ENCODE measurements at regions of chr12 and their contacts with region 1.

Region 1: DNA sequence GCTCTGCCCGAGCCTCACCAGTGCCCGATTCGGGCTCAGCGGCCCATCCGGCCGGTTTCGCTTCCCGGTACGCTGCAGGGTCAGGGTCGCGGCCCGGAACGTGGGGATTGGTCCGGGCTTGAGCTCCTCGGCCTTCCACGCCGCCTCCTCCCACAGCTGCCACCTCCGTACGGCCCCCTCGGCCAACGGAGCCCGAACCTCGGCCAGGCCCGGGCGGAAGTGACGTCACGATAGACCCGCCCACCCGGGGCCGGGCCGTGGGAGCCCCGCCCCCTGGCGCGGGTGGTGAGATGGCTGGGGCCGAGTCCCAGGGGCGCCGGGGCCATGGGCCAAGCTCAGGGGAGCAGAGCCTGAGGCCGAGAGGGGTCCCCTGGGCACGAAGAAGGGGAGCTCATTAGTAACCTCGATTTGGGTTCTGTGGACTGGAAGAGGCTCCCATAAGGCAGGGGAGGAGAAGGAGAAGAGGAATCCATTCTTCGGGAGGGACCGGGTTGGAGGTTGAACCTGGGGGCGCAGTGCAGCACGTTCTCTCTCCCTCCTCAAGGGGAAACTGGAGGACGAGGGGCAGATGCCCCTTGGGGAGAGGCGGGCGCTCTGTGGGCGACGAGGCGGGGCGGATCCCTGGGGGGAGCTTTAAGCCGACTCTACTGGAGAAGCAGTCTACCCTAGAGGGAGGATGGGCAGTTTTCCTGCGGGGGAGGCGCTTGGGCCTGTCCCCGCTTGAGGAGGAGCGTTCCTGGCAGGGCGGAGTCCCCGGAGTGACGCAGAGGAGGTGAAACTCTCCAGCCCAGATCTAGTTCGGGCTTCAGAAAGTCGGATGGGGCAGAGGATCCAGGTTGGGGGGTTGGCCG is at the start of gene MLF2:
- DNase-seq: peak; percentile 94
- ATAC-seq: peak; percentile 95
- H3K4me3 ChIP-seq: peak within 1 kb of the TSS; percentile 80
- H3K27ac ChIP-seq: peak within 1 kb of the TSS; percentile 99
- H3K4me1 ChIP-seq: peaks cover 11% of the 10 kb centered on the region
- H3K27me3 ChIP-seq: no peaks in the 10 kb centered on the region
- CTCF ChIP-seq: peak; percentile 95 to 99 (median 97); a peak in 3 of 6 replicates
- EP300 ChIP-seq: peak in 1 of 2 experiments; percentile 40; a peak in 1 of 4 replicates
- POLR2A ChIP-seq: peak; percentile 93
- RAD21 ChIP-seq: no peak
- polyA plus RNA-seq, gene MLF2: 13.5 to 21.5 TPM

Region 2: DNA sequence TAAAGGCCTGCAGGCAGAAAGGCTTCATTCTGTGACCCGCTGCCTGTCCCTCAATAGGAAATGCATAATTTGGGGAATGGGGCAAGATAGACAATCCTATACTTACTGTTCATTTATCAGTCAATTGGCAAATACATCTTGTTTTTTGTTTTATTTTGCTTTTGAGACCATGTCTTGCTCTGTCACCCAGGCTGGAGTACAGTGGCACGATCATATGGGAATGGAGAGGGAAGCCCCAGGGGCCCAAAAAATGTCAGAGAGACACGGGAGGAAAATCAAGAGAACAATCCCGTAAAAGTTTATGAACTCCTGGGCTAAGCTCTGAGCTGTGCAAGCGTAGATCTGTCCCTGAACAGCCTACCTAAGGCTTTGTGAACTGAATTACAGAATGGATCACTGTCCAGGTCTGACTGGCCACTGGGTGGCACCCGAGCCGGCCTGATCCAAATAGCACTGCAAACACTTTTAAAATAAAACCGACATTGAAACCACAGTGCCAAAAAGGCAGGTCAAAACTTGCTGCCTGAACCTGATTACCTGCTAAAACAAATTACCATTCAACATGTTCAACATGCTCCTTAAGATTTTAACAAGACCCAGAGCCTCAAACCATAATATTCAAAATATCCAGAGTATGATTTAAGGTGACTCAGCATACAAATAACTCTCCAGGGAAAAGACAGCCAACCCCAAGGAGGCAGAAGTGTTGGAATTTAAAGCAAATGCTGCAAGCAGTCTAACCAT is 17.5 kb before region 1 on chr12:
- CTCF ChIA-PET with region 1: interaction called, 19 read pairs
- POLR2A ChIA-PET with region 1: interaction called, 6 read pairs
- RAD21 ChIA-PET with region 1: interaction called, 7 read pairs
- SMC1A ChIA-PET with region 1: interaction called, 4 read pairs
- in situ Hi-C with region 1: no loop called
- intact Hi-C with region 1: no loop called
- DNase-seq: no peak
- ATAC-seq: peak; percentile 91
- H3K4me3 ChIP-seq: no peak overlapping the region
- H3K27ac ChIP-seq: 0 out of 2 replicates have a peak overlapping the region, but pooled peaks have one; percentile 60
- H3K4me1 ChIP-seq: peaks cover 5% of the 10 kb centered on the region; the same call in 1 of the 2 replicates
- H3K27me3 ChIP-seq: no peaks in the 10 kb centered on the region
- CTCF ChIP-seq: peak; percentile 59 to 64 (median 61)
- EP300 ChIP-seq: no peak
- POLR2A ChIP-seq: no peak
- RAD21 ChIP-seq: peak; percentile 67

Region 3: DNA sequence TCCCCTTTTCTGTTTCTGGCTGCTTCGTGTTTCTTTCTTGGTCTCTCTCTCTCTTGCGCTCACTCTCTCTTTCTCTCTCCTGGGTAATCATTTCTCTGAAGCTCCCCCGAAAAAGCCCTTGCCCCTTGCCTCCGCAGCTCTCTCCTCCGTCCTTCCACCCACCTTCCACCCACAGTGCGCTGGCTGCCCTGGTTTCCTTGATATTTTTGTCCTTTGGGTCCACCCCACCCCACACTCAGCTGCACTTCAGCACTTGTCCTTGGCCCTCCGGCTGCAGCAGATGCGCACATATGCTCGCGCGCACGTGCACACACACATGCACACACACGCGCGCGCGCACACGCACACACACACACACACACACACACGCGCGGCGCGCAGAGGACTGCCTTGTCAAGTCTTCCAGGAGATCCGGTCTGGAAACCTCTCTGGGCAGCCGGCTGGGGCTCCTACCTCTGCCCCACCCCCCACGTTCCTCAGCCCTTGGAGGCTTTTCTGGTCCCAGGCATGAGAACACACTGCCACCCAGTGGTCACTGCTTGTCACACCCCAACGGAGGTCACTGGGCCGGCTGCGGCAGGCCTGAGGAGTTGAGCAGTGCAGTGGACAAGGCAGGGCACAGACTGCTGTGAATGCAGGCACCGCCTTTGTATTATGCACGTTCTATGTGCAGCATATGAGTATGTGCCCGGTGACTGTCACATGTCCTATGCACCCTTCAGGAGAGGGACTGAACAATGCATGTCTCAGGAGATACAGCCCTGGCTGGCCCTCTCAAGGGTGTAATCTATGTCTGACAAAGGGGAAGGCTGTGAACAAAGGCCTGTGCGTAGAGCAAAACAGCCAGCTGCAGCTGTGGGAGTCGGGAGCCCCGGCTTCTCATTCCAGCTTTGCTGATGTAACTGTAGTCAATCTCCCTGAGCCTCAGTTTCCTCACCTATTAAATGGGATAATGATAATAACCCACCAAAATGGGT is 25.7 kb after region 1 on chr12:
- CTCF ChIA-PET with region 1: interaction called, 221 read pairs
- POLR2A ChIA-PET with region 1: interaction called, 11 read pairs
- RAD21 ChIA-PET with region 1: interaction called, 68 read pairs
- SMC1A ChIA-PET with region 1: interaction called, 84 read pairs
- in situ Hi-C with region 1: no loop called
- intact Hi-C with region 1: loop called (anchors 1 kb)
- DNase-seq: peak; percentile 72
- ATAC-seq: peak; percentile 96
- H3K4me3 ChIP-seq: peak overlapping the region; percentile 56
- H3K27ac ChIP-seq: no peak overlapping the region
- H3K4me1 ChIP-seq: peaks cover 29% of the 10 kb centered on the region
- H3K27me3 ChIP-seq: no peaks in the 10 kb centered on the region
- CTCF ChIP-seq: peak; percentile 95 to 99 (median 96); a peak in 5 of 6 replicates
- EP300 ChIP-seq: no peak
- POLR2A ChIP-seq: 0 out of 2 replicates have a peak, but pooled peaks have one; percentile 20
- RAD21 ChIP-seq: peak; percentile 97

Region 4: GRCh38 chr12:6810758-6811157 is 57.6 kb after region 1 on chr12:
- CTCF ChIA-PET with region 1: interaction called, 3 read pairs
- POLR2A ChIA-PET with region 1: interaction called, 3 read pairs
- RAD21 ChIA-PET with region 1: interaction called, 6 read pairs
- SMC1A ChIA-PET with region 1: interaction called, 12 read pairs
- in situ Hi-C with region 1: no loop called
- intact Hi-C with region 1: no loop called
- DNase-seq: no peak
- ATAC-seq: no peak
- H3K4me3 ChIP-seq: no peak overlapping the region
- H3K27ac ChIP-seq: no peak overlapping the region
- H3K4me1 ChIP-seq: 0 out of 2 replicates have a peak, but pooled peaks cover 4% of the 10 kb centered on the region
- H3K27me3 ChIP-seq: peaks cover 0 to 2% of the 10 kb centered on the region in 2 experiments; a peak in 3 of 4 replicates
- CTCF ChIP-seq: no peak
- EP300 ChIP-seq: no peak
- POLR2A ChIP-seq: no peak
- RAD21 ChIP-seq: no peak

Region 5: DNA sequence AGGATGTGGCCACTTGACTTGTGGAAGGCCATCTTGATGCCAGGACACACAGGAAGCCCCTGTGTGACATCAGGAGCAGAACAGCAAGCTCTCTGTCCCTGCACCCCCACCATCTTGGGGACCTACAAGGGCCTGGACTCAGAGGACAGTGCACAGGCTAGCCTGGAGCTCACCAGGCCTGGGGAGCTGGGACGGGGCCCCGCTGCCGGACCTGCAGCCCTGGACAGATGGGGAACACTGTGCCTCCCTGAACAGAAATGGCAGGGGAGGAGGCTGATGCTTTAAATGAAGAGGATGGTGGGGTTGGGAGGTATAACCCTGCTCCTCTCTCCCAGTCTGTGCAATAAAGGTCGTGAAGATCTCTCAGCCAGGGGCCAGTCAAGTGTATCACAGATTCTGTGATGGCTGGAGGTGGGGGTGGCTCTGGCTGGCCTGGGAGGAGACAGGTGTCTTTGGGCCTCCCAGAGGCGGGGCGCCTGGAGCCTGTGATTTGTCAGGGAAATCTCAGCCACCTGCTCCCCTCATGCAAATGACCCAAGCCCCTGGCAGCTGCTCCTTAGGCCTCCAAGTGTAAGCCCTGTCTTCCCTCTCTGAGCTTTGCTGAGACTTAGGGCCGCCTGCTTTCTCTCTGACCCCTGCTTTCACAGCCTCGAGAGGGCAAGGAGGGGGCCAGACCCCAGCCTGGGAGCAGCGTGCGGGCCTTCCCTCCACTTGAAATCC is 86.5 kb after region 1 on chr12:
- CTCF ChIA-PET with region 1: interaction called, 43 read pairs
- POLR2A ChIA-PET with region 1: interaction called, 5 read pairs
- RAD21 ChIA-PET with region 1: interaction called, 12 read pairs
- SMC1A ChIA-PET with region 1: interaction called, 35 read pairs
- in situ Hi-C with region 1: no loop called
- intact Hi-C with region 1: no loop called
- DNase-seq: no peak
- ATAC-seq: peak; percentile 82
- H3K4me3 ChIP-seq: no peak overlapping the region
- H3K27ac ChIP-seq: no peak overlapping the region; the same call in 1 of the 2 replicates
- H3K4me1 ChIP-seq: peaks cover 10% of the 10 kb centered on the region
- H3K27me3 ChIP-seq: no peaks in the 10 kb centered on the region
- CTCF ChIP-seq: no peak
- EP300 ChIP-seq: no peak
- POLR2A ChIP-seq: no peak
- RAD21 ChIP-seq: no peak

Region 6: DNA sequence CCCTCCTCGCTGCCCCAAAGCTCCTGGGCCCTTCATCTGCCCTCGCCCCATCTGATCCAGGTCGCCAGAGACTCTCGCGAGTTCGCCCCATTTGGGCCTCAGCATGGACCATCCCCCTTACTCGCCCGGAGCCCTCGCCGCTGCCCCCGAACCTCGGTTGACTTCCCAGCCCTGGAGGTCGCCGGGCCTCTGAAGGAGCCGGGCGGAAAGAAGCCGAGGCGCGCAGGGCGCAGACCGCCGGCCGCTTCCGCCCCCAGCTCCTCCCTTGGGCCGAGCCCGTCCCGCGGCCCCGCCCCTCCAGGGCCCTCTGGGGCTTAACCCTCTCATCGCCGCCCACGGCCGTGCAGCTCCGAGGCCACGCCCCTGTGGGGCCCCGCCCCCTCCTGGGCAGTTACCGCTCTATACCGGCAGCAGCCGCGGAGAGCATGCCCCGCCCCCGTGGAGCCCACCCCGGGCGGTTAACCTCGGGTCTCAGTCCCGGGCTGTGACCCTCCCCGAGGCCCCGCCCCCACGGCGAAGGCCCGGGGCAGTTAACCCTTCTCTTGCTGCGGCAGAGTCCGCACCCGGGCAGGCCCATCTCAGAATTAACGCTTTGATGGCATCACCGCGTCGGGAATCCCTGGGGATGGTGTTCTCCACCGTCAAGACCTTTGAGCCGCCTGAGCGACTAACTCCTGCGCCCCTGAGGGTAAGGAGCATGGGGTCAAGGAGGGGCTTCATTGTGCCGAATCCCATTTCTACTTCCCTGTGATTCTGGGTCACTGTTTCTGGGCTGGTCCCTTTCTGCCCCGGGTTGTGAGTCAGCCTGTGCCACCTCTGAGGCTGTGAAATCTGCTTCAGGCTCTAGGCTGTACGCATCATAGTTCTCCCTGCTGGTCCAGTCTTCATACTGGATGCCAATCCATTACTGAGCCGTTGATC is 120.2 kb after region 1 on chr12 and contains the start of gene SPSB2:
- CTCF ChIA-PET with region 1: interaction called, 7 read pairs
- POLR2A ChIA-PET with region 1: interaction called, 8 read pairs
- RAD21 ChIA-PET with region 1: interaction called, 12 read pairs
- SMC1A ChIA-PET with region 1: interaction called, 13 read pairs
- in situ Hi-C with region 1: no loop called
- intact Hi-C with region 1: no loop called
- DNase-seq: peak; percentile 69
- ATAC-seq: peak; percentile 91
- H3K4me3 ChIP-seq: peak within 1 kb of the TSS; percentile 87
- H3K27ac ChIP-seq: peak within 1 kb of the TSS; percentile 59
- H3K4me1 ChIP-seq: peaks cover 30% of the 10 kb centered on the region
- H3K27me3 ChIP-seq: no peaks in the 10 kb centered on the region
- CTCF ChIP-seq: no peak
- EP300 ChIP-seq: no peak
- POLR2A ChIP-seq: peak; percentile 77
- RAD21 ChIP-seq: no peak
- polyA plus RNA-seq, gene SPSB2: 0.08 to 0.24 TPM

Region 7: GRCh38 chr12:6978609-6979011 is 225.5 kb after region 1 on chr12:
- CTCF ChIA-PET with region 1: no interaction called
- POLR2A ChIA-PET with region 1: no interaction called
- RAD21 ChIA-PET with region 1: no interaction called
- SMC1A ChIA-PET with region 1: no interaction called
- in situ Hi-C with region 1: no loop called
- intact Hi-C with region 1: no loop called
- DNase-seq: no peak
- ATAC-seq: no peak
- H3K4me3 ChIP-seq: no peak overlapping the region
- H3K27ac ChIP-seq: no peak overlapping the region
- H3K4me1 ChIP-seq: peaks cover 12% of the 10 kb centered on the region
- H3K27me3 ChIP-seq: no peaks in the 10 kb centered on the region
- CTCF ChIP-seq: no peak
- EP300 ChIP-seq: no peak
- POLR2A ChIP-seq: no peak
- RAD21 ChIP-seq: no peak